ENCODE measurements at regions of chr9 and their contacts with region 1.

Region 1: GRCh38 chr9:107973456-107973855 is 483.9 kb upstream of the KLF4 start:
- H3K4me3 ChIP-seq: no peak overlapping the region
- H3K27ac ChIP-seq: no peak overlapping the region
- H3K4me1 ChIP-seq: no peaks in the 10 kb centered on the region
- CTCF ChIP-seq: no peak

Region 2: DNA sequence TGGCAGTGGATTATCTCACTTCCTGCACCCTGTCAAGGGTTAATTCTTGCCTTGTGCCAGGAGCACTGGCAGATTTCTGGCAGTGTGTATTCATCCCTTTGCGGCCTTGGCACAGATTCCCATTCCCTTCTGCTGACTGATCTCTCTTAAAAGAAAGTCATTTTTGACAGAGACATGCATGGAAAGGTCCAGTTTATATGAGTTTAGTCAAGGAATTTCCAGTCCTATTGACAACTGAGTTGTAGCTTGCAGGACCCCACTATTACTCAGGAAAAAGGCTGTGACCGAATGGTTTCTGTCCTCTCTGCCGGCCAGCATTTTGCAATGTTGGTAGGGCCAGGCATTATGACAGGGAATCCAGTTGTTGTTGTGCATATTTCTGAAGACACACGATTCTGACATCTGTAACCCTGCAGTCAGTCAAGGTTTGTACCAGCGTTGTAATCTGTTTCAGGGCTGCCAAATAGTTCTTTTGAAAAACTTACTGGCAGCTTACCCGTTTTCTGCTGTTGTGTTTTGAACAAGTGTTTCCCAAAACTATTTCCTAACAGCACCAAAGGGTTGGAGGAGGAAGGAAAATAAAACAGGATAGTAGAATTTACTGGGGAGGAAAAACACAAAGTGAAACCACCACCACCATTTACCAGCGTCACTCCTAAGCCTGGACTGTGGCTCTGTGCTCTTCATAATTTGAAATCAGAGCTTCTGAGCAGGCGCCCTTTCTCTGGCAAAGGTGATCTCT is 240.5 kb before region 1 on chr9:
- CTCF ChIA-PET with region 1: no interaction called
- POLR2A ChIA-PET with region 1: interaction called, 13 read pairs
- H3K4me3 ChIP-seq: no peak overlapping the region
- H3K27ac ChIP-seq: no peak overlapping the region
- H3K4me1 ChIP-seq: no peaks in the 10 kb centered on the region
- CTCF ChIP-seq: no peak

Measured in HEK293 (cell line).